Activated CD8-positive, alpha-beta T cell treated with anti-CD3 and anti-CD28 coated beads, Interleukin-2, amount 10 ng/mL, durations not matched to agents 7 days and 5 days (primary cell): ENCODE measurements at regions of chr12 and their contacts with region 1.

Region 1: DNA sequence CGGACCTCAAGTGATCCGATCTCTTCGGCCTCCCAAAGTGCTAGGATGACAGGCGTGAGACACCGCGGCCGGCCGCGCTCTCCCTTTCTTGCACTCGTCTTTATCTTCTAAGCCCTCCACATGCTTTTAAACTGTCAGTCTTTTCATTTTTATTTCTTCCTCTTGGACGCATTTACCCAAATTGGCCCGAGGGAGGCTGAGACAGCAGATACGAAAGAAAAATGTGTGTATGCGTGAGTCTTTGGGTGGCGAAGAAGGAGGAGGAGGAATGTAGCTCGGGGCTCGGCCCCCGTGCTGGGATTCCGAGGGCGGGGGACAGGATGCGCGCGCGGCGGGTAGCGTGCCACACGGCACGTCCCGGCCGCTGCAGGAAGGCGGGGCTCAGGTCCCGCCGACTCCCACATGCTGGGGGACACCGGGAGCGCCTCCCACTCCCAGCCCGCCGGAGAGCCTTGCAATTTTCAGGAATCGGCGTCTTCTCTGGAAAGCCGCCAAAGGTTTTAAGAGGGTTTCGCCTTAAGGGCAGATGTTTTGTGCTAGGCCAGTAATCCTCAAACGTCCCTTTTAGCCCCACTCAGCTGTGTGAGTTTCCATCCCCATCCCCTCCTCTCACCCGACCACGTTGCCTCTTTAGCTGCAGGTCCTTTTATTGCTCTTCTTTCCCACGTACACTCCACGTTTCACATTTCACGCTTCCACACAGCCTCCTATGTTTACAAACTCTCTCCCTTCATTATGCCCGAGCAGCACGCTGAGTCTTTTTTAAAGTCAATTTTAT is 34.7 kb upstream of the SLC2A3 start:
- DNase-seq: peak; percentile 91
- ATAC-seq: peak; percentile 96
- H3K4me3 Mint-ChIP-seq: peak overlapping the region; percentile 74
- H3K27ac Mint-ChIP-seq: peak overlapping the region; percentile 95
- H3K4me1 Mint-ChIP-seq: peaks cover 42% of the 10 kb centered on the region
- H3K27me3 Mint-ChIP-seq: no peaks in the 10 kb centered on the region

Region 2: DNA sequence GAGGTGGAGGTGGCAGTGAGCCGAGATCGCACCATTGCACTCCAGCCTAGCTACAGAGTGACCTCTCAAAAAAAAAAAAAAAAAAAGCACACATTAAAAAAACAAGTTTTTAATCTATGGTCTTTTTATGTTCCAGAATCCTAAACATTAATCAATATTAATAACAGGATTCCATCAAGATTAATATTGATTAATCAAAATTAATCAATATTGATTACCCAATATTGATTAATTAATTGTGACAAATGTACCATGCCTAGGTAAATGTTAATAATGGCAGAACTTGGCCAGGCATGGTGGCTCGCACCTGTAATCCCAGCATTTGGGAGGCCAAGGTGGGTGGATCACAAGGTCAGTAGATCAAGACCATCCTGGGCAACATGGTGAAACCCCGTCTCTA is 189.4 kb before region 1 on chr12:
- CTCF ChIA-PET with region 1: no interaction called
- POLR2A ChIA-PET with region 1: no interaction called
- DNase-seq: no peak
- ATAC-seq: no peak
- H3K4me3 Mint-ChIP-seq: no peak overlapping the region
- H3K27ac Mint-ChIP-seq: no peak overlapping the region
- H3K4me1 Mint-ChIP-seq: no peaks in the 10 kb centered on the region
- H3K27me3 Mint-ChIP-seq: peaks cover 2% of the 10 kb centered on the region

Region 3: GRCh38 chr12:7995266-7995963 is 24.8 kb after region 1 on chr12:
- CTCF ChIA-PET with region 1: interaction called, 15 read pairs
- POLR2A ChIA-PET with region 1: interaction called, 13 read pairs
- DNase-seq: peak; percentile 89
- ATAC-seq: peak; percentile 100
- H3K4me3 Mint-ChIP-seq: no peak overlapping the region
- H3K27ac Mint-ChIP-seq: no peak overlapping the region
- H3K4me1 Mint-ChIP-seq: peaks cover 15% of the 10 kb centered on the region
- H3K27me3 Mint-ChIP-seq: no peaks in the 10 kb centered on the region